Activated CD4-positive, alpha-beta T cell treated with anti-CD3 and anti-CD28 coated beads for 36 hours (primary cell): ENCODE measurements at regions of chr5 and their contacts with region 1.

Region 1: DNA sequence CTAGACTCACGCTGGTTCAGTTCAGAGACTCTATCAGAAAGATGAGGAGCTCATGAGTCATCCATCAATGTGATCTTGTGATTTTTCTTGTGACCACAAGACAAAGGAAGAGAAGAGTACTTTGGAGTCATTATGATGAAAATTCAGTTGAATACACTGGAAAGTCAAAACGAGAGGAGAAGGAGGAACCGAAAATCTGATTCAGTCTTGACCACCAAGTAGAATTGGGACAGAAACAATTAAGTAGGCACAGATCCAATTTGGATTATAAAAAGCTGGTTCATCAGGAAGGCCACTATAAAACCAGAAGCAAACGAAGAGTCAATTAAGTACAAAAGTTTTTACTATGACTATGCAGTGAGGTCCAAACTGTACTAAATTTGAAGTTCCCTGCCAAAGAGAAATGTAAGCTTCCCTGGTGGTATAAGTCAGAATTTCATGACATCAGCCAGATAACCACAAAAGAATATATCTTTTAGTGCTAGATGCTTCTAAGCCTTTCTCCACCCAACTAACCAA is 90.9 kb downstream of the THBS4 start:
- DNase-seq: peak; percentile 33
- ATAC-seq: peak; percentile 92
- H3K4me3 Mint-ChIP-seq: peak overlapping the region; percentile 44
- H3K27ac Mint-ChIP-seq: peak overlapping the region; percentile 61
- H3K4me1 Mint-ChIP-seq: peaks cover 50% of the 10 kb centered on the region
- H3K27me3 Mint-ChIP-seq: no peaks in the 10 kb centered on the region

Region 2: GRCh38 chr5:79001471-79001870 is 1124.5 kb before region 1 on chr5:
- CTCF ChIA-PET with region 1: no interaction called
- POLR2A ChIA-PET with region 1: no interaction called
- intact Hi-C with region 1: no loop called
- DNase-seq: no peak
- ATAC-seq: no peak
- H3K4me3 Mint-ChIP-seq: no peak overlapping the region
- H3K27ac Mint-ChIP-seq: no peak overlapping the region
- H3K4me1 Mint-ChIP-seq: no peaks in the 10 kb centered on the region
- H3K27me3 Mint-ChIP-seq: peaks cover 17% of the 10 kb centered on the region

Region 3: GRCh38 chr5:79689541-79690466 is 436.2 kb before region 1 on chr5 and contains the start of gene CMYA5:
- CTCF ChIA-PET with region 1: no interaction called
- POLR2A ChIA-PET with region 1: no interaction called
- intact Hi-C with region 1: no loop called
- DNase-seq: no peak
- ATAC-seq: no peak
- H3K4me3 Mint-ChIP-seq: no peak within 1 kb of the TSS
- H3K27ac Mint-ChIP-seq: no peak within 1 kb of the TSS
- H3K4me1 Mint-ChIP-seq: peaks cover 7% of the 10 kb centered on the region
- H3K27me3 Mint-ChIP-seq: no peaks in the 10 kb centered on the region
- total RNA-seq, gene CMYA5: 0.21 to 0.25 TPM

Region 4: DNA sequence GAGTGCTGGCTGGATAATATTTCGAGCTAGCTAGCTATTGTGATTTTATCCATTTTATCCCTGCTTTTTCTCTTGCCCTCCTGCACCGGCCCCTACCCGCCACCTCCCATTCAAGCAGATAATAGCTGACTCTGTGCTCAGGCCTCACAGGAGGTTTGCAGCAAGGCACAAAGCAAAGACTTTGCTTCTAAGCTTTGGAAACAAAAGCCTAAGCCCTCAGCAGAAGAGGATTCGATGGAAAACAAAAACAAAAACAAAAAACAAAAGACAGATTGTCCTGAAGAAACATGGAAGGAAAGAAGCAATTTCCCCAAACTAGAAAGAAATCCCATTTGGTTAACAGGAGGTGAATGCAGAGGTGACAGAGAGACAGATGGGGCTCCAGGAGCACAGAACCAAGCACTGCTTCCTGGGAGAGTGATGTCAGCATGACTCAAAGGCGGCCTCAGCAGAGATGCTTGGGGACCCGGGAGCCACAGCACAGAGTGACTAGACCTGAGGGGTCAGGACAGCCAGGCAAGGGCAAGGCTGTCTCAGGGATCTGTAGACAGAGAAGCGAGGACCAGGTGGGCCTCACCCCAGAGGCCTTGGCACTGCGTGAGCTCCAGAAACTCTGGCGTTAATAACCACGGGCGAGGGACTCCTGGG is 163.3 kb before region 1 on chr5:
- CTCF ChIA-PET with region 1: no interaction called
- POLR2A ChIA-PET with region 1: no interaction called
- intact Hi-C with region 1: loop called in 1 of 2 experiments (anchors 5 kb)
- DNase-seq: peak; percentile 83
- ATAC-seq: peak; percentile 89
- H3K4me3 Mint-ChIP-seq: peak overlapping the region; percentile 15
- H3K27ac Mint-ChIP-seq: peak overlapping the region; percentile 93
- H3K4me1 Mint-ChIP-seq: peaks cover 32% of the 10 kb centered on the region
- H3K27me3 Mint-ChIP-seq: peaks cover 14% of the 10 kb centered on the region

Region 5: DNA sequence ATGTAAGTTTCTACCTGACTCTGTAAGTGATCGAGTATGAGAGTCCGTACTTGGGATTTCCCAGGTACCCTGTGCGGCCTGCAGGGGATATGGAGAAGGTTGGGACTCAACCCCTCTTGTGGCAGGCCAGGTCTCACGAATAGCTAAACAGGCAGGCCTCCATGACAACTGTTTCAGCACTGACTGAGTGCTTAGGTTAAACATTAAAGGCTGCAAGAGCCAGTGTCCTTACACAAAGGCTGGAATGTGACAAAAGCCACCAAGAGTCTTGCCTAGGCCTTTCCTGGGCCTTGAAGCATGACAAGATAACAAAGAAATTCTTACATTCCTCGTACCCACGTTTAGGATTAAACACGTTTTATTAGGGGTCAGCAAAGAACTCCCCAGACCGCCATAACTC is 32.2 kb before region 1 on chr5:
- CTCF ChIA-PET with region 1: interaction called, 9 read pairs
- POLR2A ChIA-PET with region 1: no interaction called
- intact Hi-C with region 1: loop called in 1 of 2 experiments (anchors 5 kb)
- DNase-seq: no peak
- ATAC-seq: no peak
- H3K4me3 Mint-ChIP-seq: no peak overlapping the region
- H3K27ac Mint-ChIP-seq: peak overlapping the region; percentile 39
- H3K4me1 Mint-ChIP-seq: peaks cover 23% of the 10 kb centered on the region
- H3K27me3 Mint-ChIP-seq: no peaks in the 10 kb centered on the region

Region 6: GRCh38 chr5:80181618-80182211 is 55.7 kb after region 1 on chr5:
- CTCF ChIA-PET with region 1: interaction called, 3 read pairs
- POLR2A ChIA-PET with region 1: interaction called, 4 read pairs
- intact Hi-C with region 1: loop called in 1 of 2 experiments (anchors 2 kb)
- DNase-seq: peak; percentile 59
- ATAC-seq: peak; percentile 43
- H3K4me3 Mint-ChIP-seq: no peak overlapping the region
- H3K27ac Mint-ChIP-seq: peak overlapping the region; percentile 89
- H3K4me1 Mint-ChIP-seq: peaks cover 81% of the 10 kb centered on the region
- H3K27me3 Mint-ChIP-seq: no peaks in the 10 kb centered on the region

Region 7: GRCh38 chr5:80204808-80205614 is 79.0 kb after region 1 on chr5:
- CTCF ChIA-PET with region 1: no interaction called
- POLR2A ChIA-PET with region 1: interaction called, 4 read pairs
- intact Hi-C with region 1: loop called in 1 of 2 experiments (anchors 1 kb)
- DNase-seq: no peak
- ATAC-seq: peak; percentile 66
- H3K4me3 Mint-ChIP-seq: peak overlapping the region; percentile 7
- H3K27ac Mint-ChIP-seq: peak overlapping the region; percentile 88
- H3K4me1 Mint-ChIP-seq: peaks cover 74% of the 10 kb centered on the region
- H3K27me3 Mint-ChIP-seq: no peaks in the 10 kb centered on the region